ENCODE measurements at regions of chr20 and their contacts with region 1.

Region 1: DNA sequence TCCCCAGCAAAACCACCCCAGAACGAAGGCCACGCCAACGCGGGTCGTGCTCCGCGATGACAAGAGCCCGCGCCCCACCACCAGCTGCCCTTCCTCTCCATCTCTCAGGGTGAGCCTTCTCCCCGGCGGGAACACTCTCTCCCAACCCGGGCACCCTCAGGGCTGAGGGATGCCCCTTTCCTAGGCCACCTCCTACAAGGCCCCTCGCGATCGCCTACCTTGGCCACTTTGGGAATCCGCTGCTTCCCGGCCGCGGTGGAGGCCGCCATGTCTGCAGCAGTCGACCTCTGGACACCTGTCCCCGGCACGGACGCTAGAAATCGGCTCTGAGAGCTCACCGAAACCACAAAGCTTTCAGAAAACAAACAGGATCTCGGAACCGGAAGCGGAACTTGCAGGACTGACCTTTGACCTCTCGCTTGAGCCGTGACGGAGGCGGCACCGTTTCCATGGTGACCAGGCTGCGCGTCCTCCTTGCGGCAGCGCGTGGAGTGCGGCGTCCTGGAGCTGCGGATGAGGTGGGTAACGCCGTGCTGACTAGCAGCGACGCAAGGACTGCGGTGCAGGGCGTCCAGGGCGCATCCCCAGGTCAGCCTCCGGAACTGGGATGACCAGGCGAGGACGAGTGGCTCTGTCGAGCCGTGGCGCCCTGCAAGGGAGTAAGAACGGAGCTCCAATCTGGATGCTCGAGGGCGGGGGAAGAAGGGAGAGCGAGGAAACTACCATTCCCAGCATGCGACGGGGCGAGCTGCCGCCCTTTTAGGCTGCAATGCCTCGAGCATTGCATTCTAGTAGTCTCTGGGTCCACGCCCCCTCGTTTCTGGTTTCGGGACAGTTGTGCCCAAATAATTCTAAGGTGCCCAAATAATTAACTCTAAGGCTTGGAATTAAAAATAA is at the starts of genes CFAP61 and CRNKL1:
- DNase-seq: peak; percentile 98
- ATAC-seq: peak; percentile 93
- H3K4me3 Mint-ChIP-seq: peak within 1 kb of the TSS; percentile 97
- H3K27ac Mint-ChIP-seq: peak within 1 kb of the TSS; percentile 97
- H3K4me1 Mint-ChIP-seq: peaks cover 25% of the 10 kb centered on the region
- H3K27me3 Mint-ChIP-seq: no peaks in the 10 kb centered on the region
- total RNA-seq, gene CFAP61: not detected
- total RNA-seq, gene CRNKL1: 17.4 to 20.8 TPM

Region 2: GRCh38 chr20:19566226-19566965 is 485.9 kb before region 1 on chr20:
- CTCF ChIA-PET with region 1: no interaction called
- POLR2A ChIA-PET with region 1: no interaction called
- DNase-seq: no peak
- ATAC-seq: no peak
- H3K4me3 Mint-ChIP-seq: no peak overlapping the region
- H3K27ac Mint-ChIP-seq: no peak overlapping the region
- H3K4me1 Mint-ChIP-seq: no peaks in the 10 kb centered on the region
- H3K27me3 Mint-ChIP-seq: peaks cover 2% of the 10 kb centered on the region

Region 3: GRCh38 chr20:20017001-20017843 is 35.1 kb before region 1 on chr20 and contains the start of gene NAA20:
- CTCF ChIA-PET with region 1: interaction called, 15 read pairs
- POLR2A ChIA-PET with region 1: interaction called, 19 read pairs
- DNase-seq: peak; percentile 94
- ATAC-seq: peak; percentile 97
- H3K4me3 Mint-ChIP-seq: peak within 1 kb of the TSS; percentile 93
- H3K27ac Mint-ChIP-seq: peak within 1 kb of the TSS; percentile 89
- H3K4me1 Mint-ChIP-seq: peaks cover 53% of the 10 kb centered on the region
- H3K27me3 Mint-ChIP-seq: no peaks in the 10 kb centered on the region
- total RNA-seq, gene NAA20: 55.8 to 59.1 TPM

Measured in activated CD8-positive, alpha-beta T cell treated with anti-CD3 and anti-CD28 coated beads, Interleukin-2, amount 10 ng/mL, durations not matched to agents 7 days and 5 days (primary cell).